Gastrocnemius medialis (tissue), 4 donors: ENCODE measurements at regions of chr4 and their contacts with region 1.

Region 1: GRCh38 chr4:82900331-82901128 is at the start of gene THAP9:
- DNase-seq: peak; percentile 99
- ATAC-seq: peak; percentile 96
- H3K4me3 ChIP-seq: peak within 1 kb of the TSS; percentile 65 to 92 (median 82)
- H3K27ac ChIP-seq: peak within 1 kb of the TSS; percentile 94 to 98 (median 96)
- H3K4me1 ChIP-seq: peaks cover 32 to 34% of the 10 kb centered on the region in 2 donors
- H3K27me3 ChIP-seq: no peaks in the 10 kb centered on the region
- CTCF ChIP-seq: no peak
- POLR2A ChIP-seq: peak; percentile 78 to 89
- total RNA-seq, gene THAP9: 7.6 to 11.1 (median 8.4) TPM

Region 2: DNA sequence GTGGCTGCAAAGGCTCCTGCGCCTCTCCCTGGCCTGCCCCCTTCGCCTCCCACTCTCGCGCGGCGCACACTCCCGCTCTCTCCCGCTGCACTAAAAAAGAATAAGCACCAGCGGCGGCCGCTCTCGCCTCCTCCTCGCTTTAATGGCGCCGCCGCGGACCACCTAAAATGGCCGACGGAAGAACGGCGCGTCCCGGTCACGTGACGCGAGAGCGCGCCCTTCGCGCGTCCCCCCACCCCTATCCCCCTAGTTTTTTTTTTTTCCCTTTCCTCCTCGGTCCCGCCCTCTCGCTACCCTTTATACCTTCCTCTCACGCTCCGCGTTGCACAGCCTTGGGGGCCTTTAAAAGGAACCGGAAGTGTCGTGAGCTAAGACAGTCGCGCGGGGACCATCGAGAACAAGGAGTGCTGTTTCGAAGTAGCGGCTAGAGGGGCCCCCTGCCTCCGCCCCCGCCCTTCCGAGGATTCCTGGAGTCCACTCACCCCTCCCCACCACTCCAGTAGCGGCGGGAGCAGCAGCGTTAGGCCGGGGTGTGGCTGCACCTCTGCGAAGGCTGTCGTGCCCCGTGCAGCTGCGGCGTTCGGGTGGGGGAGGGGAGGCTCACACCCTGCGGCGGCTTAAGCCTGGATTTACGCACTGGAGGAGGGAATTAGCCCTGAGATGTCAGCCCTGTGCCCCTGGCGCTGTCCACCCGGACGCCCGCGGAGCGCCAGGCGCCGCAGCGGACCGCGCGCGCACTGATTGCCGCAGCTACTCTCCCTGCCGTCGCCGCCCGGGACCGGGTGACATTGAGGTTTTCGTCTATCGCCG is 526.5 kb before region 1 on chr4 and contains the start of gene HNRNPD:
- in situ Hi-C with region 1: no loop called
- intact Hi-C with region 1: loop called (anchors 1 kb)
- DNase-seq: peak; percentile 97 to 99
- ATAC-seq: peak; percentile 90 to 91
- H3K4me3 ChIP-seq: peak within 1 kb of the TSS; percentile 82 to 99 (median 96)
- H3K27ac ChIP-seq: peak within 1 kb of the TSS; percentile 99 to 100 (median 100)
- H3K4me1 ChIP-seq: peaks cover 42 to 44% of the 10 kb centered on the region in 2 donors
- H3K27me3 ChIP-seq: no peaks in the 10 kb centered on the region
- CTCF ChIP-seq: peak in 2 of 5 experiments; percentile 20 to 21
- POLR2A ChIP-seq: peak; percentile 92 to 95
- total RNA-seq, gene HNRNPD: 26.9 to 46.0 (median 37.4) TPM

Region 3: GRCh38 chr4:82930848-82931755 is 30.6 kb after region 1 on chr4:
- in situ Hi-C with region 1: no loop called
- intact Hi-C with region 1: no loop called
- DNase-seq: no peak
- ATAC-seq: no peak
- H3K4me3 ChIP-seq: no peak overlapping the region
- H3K27ac ChIP-seq: no peak overlapping the region
- H3K4me1 ChIP-seq: peaks cover 11 to 13% of the 10 kb centered on the region in 2 donors
- H3K27me3 ChIP-seq: no peaks in the 10 kb centered on the region
- CTCF ChIP-seq: no peak
- POLR2A ChIP-seq: no peak